ENCODE measurements at regions of chr1 and their contacts with region 1.

Region 1: GRCh38 chr1:198713081-198713480 is 74.2 kb downstream of the PTPRC start:
- DNase-seq: no peak
- ATAC-seq: peak; percentile 21; the same call in 2 of the 3 replicates
- H3K4me3 ChIP-seq: no peak overlapping the region
- H3K27ac ChIP-seq: no peak overlapping the region
- H3K4me1 ChIP-seq: no peaks in the 10 kb centered on the region
- H3K27me3 ChIP-seq: no peaks in the 10 kb centered on the region
- CTCF ChIP-seq: no peak
- EP300 ChIP-seq: no peak
- POLR2A ChIP-seq: no peak
- RAD21 ChIP-seq: no peak

Region 2: GRCh38 chr1:198359024-198359653 is 353.9 kb before region 1 on chr1:
- CTCF ChIA-PET with region 1: no interaction called
- POLR2A ChIA-PET with region 1: no interaction called
- RAD21 ChIA-PET with region 1: no interaction called
- SMC1A ChIA-PET with region 1: no interaction called
- in situ Hi-C with region 1: no loop called
- intact Hi-C with region 1: no loop called
- DNase-seq: no peak
- ATAC-seq: peak; percentile 70
- H3K4me3 ChIP-seq: no peak overlapping the region
- H3K27ac ChIP-seq: no peak overlapping the region
- H3K4me1 ChIP-seq: no peaks in the 10 kb centered on the region
- H3K27me3 ChIP-seq: no peaks in the 10 kb centered on the region
- CTCF ChIP-seq: peak; percentile 39 to 50 (median 45); a peak in 4 of 6 replicates
- EP300 ChIP-seq: no peak
- POLR2A ChIP-seq: no peak
- RAD21 ChIP-seq: peak; percentile 59

Region 3: GRCh38 chr1:198657550-198658064 is 55.5 kb before region 1 on chr1:
- CTCF ChIA-PET with region 1: interaction called, 3 read pairs
- POLR2A ChIA-PET with region 1: no interaction called
- RAD21 ChIA-PET with region 1: no interaction called
- SMC1A ChIA-PET with region 1: interaction called, 3 read pairs
- in situ Hi-C with region 1: loop called (anchors 5 kb)
- intact Hi-C with region 1: no loop called
- DNase-seq: no peak
- ATAC-seq: peak; percentile 18
- H3K4me3 ChIP-seq: peak overlapping the region; percentile 9; the same call in 1 of the 2 replicates
- H3K27ac ChIP-seq: peak overlapping the region; percentile 74
- H3K4me1 ChIP-seq: peaks cover 32% of the 10 kb centered on the region
- H3K27me3 ChIP-seq: no peaks in the 10 kb centered on the region
- CTCF ChIP-seq: no peak
- EP300 ChIP-seq: no peak
- POLR2A ChIP-seq: no peak
- RAD21 ChIP-seq: no peak